ENCODE measurements at regions of chr1 and their contacts with region 1.

Region 1: DNA sequence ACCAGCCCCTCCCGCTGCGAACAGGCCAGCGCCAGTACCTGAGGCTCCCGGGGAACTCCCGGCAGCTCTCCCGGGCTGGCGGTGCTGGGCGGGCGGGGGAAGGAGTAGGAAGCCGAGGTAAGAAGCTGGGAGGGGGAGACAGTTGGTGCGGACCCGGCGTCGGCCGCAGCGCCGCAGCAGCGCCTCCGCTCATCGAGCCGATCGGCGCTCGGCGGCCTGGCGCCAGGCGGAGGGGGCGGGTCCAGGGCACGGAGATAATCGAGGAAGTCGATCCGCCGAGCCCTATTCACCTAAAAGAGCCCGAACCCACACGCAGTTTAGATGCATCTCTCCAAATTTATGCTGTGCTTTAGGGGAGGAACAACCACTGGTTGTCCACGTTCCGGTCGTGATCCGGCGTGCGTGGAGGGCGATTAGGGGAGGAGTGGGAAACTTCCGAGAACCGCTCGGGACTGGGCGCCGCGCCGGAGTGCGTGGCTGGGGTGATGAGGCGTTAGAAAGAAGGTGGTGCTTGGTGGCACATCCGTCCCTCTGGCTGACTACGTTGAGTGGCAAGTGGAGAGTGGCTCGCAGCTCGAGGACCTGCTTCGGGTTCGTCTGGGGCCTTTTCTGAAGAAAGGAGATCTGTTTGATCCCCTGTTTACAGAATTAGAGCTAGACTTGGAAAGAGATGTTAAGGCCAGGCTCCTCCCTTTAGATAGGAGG is at the start of gene VAMP4:
- DNase-seq: peak; percentile 90
- H3K4me3 Mint-ChIP-seq: peak within 1 kb of the TSS; percentile 96
- H3K27ac Mint-ChIP-seq: peak within 1 kb of the TSS; percentile 99
- H3K4me1 Mint-ChIP-seq: peaks cover 40% of the 10 kb centered on the region
- H3K27me3 Mint-ChIP-seq: no peaks in the 10 kb centered on the region
- total RNA-seq, gene VAMP4: 10.5 to 10.9 TPM

Region 2: DNA sequence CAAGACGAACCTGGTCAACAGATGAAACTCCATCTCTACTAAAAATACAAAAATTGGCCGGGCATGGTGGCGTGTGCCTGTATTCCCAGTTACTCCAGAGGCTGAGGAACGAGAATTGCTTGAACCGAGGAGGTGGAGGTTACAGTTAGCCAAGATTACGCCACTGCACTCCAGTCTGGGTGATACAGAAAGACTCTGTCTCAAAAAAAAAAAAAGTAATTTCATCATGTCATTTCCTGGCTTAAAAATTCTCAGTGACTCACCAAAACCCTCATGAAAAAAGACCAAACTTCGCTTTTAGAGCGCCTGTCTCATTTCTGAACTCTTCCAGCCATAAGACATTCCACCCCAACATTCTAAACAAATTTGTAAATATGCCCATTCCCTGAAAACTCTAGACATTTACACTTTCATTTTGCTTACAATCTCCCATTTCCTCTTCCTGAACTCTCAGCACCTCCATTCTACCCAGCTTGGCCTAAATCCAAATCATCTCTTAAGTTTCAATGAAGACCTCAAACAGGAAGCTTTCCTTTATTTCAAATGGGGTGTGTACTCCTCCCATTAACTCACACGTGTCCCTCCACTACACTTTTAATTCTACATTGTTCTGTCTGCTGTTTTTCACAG is 307.2 kb before region 1 on chr1:
- CTCF ChIA-PET with region 1: no interaction called
- intact Hi-C with region 1: loop called (anchors 2 kb)
- DNase-seq: peak; percentile 52
- H3K4me3 Mint-ChIP-seq: peak overlapping the region; percentile 23
- H3K27ac Mint-ChIP-seq: peak overlapping the region; percentile 87
- H3K4me1 Mint-ChIP-seq: peaks cover 18% of the 10 kb centered on the region
- H3K27me3 Mint-ChIP-seq: peaks cover 6% of the 10 kb centered on the region

Region 3: GRCh38 chr1:171644805-171645483 is 97.1 kb before region 1 on chr1:
- CTCF ChIA-PET with region 1: interaction called, 13 read pairs
- intact Hi-C with region 1: loop called (anchors 1 kb)
- DNase-seq: peak; percentile 87
- H3K4me3 Mint-ChIP-seq: no peak overlapping the region
- H3K27ac Mint-ChIP-seq: no peak overlapping the region
- H3K4me1 Mint-ChIP-seq: peaks cover 4% of the 10 kb centered on the region
- H3K27me3 Mint-ChIP-seq: no peaks in the 10 kb centered on the region

Region 4: DNA sequence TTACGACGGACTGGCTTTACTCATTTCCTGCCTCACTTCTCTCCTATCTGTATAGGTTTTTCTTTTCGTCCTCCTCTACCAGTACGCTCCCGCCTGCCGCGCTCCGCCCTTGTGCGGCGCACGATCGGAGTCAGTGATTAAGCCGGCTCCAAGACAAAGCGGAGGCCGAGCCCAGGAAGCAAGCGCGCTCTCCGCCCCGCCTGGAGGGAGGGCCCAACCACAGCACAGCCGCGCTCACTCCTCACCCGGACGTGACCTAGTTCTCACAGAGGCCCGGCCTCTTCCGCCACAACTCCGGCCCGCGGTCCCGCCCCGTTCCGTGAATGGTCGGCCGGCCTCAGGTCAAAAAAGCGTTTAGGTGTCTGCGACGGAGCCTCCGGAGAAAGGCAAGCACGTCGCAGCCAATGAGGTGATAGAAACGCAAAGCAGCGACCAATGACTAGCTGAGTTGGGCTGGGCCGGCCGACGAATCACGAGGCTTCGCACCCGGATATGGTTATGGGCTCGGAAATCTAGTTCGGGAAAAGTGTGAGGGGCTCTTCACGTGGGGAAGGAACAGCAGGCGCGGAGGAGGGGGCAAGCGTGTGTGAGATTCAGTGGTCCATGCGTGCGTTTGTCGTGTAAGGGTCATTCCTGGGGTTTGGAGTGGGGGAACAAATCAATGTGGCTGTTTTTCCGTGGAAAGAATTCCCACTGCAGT is 39.3 kb after region 1 on chr1 and contains the start of gene METTL13:
- CTCF ChIA-PET with region 1: interaction called, 6 read pairs
- intact Hi-C with region 1: loop called (anchors 1 kb)
- DNase-seq: peak; percentile 99
- H3K4me3 Mint-ChIP-seq: peak within 1 kb of the TSS; percentile 100
- H3K27ac Mint-ChIP-seq: peak within 1 kb of the TSS; percentile 98
- H3K4me1 Mint-ChIP-seq: peaks cover 49% of the 10 kb centered on the region
- H3K27me3 Mint-ChIP-seq: no peaks in the 10 kb centered on the region
- total RNA-seq, gene METTL13: 39.5 to 40.9 TPM

Region 5: DNA sequence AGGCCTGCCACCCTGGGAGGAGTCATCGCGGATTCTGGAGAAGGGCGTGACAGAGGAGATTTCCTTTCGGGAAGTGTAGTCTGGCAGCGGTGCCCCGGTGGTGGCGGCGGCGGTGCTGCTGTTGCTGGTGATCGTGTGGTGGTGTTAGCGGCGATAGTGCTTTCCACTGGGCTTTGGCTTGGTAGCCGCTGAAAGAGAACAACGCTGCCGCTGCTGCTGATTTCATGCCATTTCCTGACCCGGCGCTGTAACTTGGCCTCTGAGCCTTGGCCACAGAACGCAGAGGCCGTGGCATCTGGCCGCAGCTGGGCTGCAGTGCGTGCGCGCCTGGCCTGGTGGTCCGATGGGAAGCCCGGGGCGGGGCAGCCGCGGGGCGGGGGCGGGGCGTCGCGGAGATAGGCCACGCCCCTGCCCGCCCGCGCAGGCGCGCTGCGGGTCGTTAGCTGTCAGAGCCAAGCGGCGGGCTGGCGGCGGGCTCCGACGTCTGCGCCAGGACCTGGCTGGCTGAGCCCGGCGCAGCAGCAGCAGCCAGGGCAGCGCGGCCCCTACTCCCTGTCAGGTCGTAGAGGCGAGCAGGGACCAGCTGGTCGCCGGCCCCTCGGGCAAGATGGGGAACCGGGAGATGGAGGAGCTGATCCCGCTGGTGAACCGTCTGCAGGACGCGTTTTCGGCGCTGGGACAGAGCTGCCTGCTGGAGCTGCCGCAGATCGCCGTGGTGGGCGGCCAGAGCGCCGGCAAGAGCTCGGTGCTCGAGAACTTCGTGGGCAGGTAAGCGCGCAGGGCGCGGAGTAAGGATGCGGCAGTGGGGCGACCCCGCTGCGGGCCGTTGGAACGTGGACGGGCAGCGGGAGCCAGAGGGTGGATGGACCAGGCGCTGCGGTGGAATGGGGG is 99.3 kb after region 1 on chr1 and contains the start of gene DNM3:
- CTCF ChIA-PET with region 1: interaction called, 3 read pairs
- intact Hi-C with region 1: loop called (anchors 1 kb)
- DNase-seq: peak; percentile 66
- H3K4me3 Mint-ChIP-seq: peak within 1 kb of the TSS; percentile 79
- H3K27ac Mint-ChIP-seq: no peak within 1 kb of the TSS
- H3K4me1 Mint-ChIP-seq: peaks cover 14% of the 10 kb centered on the region
- H3K27me3 Mint-ChIP-seq: peaks cover 13% of the 10 kb centered on the region
- total RNA-seq, gene DNM3: 0.96 to 0.98 TPM

Region 6: GRCh38 chr1:171877701-171878100 is 135.7 kb after region 1 on chr1:
- CTCF ChIA-PET with region 1: no interaction called
- intact Hi-C with region 1: no loop called
- DNase-seq: no peak
- H3K4me3 Mint-ChIP-seq: no peak overlapping the region
- H3K27ac Mint-ChIP-seq: no peak overlapping the region
- H3K4me1 Mint-ChIP-seq: no peaks in the 10 kb centered on the region
- H3K27me3 Mint-ChIP-seq: no peaks in the 10 kb centered on the region

Measured in activated naive CD4-positive, alpha-beta T cell treated with anti-CD3 and anti-CD28 coated beads for 36 hours (primary cell).